Activated B cell treated with CpG ODN at 0.5 μM for 24 hours (primary cell): ENCODE measurements at regions of chr18 and their contacts with region 1.

Region 1: DNA sequence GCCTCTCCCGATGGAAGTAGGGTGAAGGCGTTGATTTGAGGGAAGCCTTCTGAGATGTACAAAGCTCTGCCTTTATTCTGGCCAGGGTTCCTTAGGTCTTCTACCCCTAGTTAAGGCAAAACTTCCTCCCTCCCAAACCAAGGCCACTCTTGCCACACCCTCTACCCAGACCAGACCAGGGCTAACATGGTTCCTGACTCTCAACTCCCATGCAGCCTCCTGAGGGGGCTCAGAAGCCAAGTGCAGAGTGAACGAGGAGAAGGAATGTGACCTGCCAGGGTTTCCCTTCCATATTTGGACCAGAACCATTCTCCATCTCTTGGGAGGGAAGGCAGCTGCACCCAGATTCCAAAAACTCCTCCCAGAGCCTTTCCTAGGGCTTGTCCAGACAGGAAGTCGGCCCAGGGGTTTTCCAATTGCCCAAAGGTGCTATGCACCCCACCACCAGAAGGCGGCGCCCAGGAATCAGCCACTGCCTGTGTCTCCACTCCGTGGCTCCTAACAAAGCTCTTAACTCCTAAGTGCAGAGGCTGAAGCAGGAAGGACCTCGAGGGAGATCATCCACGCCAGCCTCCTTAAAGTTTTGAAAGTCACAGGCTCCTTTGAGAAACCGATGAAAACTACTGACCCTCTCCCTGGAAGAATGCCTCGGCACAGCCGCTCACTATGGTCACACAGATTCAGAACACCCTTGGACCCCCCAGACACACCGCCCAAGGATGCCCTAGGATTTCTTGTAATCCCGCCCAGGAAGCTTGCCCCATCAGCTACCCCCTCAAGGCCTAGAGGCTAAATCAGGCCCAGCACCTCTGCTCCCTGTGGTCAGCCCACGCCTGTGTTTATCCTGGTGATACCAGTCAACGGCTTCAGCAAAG is 157.8 kb downstream of the SMAD2 start:
- DNase-seq: peak; percentile 42
- ATAC-seq: peak; percentile 45
- H3K4me3 Mint-ChIP-seq: no peak overlapping the region
- H3K27ac Mint-ChIP-seq: no peak overlapping the region
- H3K4me1 Mint-ChIP-seq: no peaks in the 10 kb centered on the region
- H3K27me3 Mint-ChIP-seq: peaks cover 14% of the 10 kb centered on the region
- CTCF ChIP-seq: no peak

Region 2: DNA sequence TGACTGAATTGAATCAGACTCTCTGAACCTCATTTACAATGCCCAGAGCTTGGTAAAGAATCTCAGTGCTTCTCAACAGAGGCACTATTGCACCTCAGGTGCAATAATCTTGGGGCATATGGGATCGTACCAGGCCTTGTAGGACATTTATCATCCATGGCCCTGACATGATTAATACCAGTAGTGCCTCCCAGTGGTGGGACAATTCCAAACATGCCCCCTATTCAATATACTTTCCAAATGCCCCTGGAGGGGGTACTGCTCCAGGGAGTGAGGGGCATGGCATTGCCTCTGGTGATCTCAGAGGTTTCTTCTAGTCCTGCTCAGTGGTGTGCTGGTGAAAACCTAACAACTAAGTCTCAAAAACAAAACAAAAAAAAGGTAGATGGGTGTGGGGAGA is 332.7 kb after region 1 on chr18:
- CTCF ChIA-PET with region 1: no interaction called
- POLR2A ChIA-PET with region 1: no interaction called
- intact Hi-C with region 1: loop called (anchors 1 kb)
- DNase-seq: no peak
- ATAC-seq: no peak
- H3K4me3 Mint-ChIP-seq: no peak overlapping the region
- H3K27ac Mint-ChIP-seq: no peak overlapping the region
- H3K4me1 Mint-ChIP-seq: no peaks in the 10 kb centered on the region
- H3K27me3 Mint-ChIP-seq: peaks cover 22% of the 10 kb centered on the region
- CTCF ChIP-seq: no peak